Activated B cell treated with CpG ODN at 0.5 μM for 24 hours (primary cell): ENCODE measurements at regions of chr13 and their contacts with region 1.

Region 1: GRCh38 chr13:37011788-37012187 is 11.2 kb downstream of the EXOSC8 start:
- DNase-seq: no peak
- ATAC-seq: no peak
- H3K4me3 Mint-ChIP-seq: no peak overlapping the region
- H3K27ac Mint-ChIP-seq: no peak overlapping the region
- H3K4me1 Mint-ChIP-seq: no peaks in the 10 kb centered on the region
- H3K27me3 Mint-ChIP-seq: no peaks in the 10 kb centered on the region
- CTCF ChIP-seq: no peak

Region 2: GRCh38 chr13:37029617-37030016 is 17.8 kb after region 1 on chr13:
- CTCF ChIA-PET with region 1: no interaction called
- POLR2A ChIA-PET with region 1: no interaction called
- intact Hi-C with region 1: loop called (anchors 2 kb)
- DNase-seq: no peak
- ATAC-seq: no peak
- H3K4me3 Mint-ChIP-seq: no peak overlapping the region
- H3K27ac Mint-ChIP-seq: no peak overlapping the region
- H3K4me1 Mint-ChIP-seq: no peaks in the 10 kb centered on the region
- H3K27me3 Mint-ChIP-seq: no peaks in the 10 kb centered on the region
- CTCF ChIP-seq: no peak